ENCODE measurements at regions of chr1 and their contacts with region 1.

Region 1: DNA sequence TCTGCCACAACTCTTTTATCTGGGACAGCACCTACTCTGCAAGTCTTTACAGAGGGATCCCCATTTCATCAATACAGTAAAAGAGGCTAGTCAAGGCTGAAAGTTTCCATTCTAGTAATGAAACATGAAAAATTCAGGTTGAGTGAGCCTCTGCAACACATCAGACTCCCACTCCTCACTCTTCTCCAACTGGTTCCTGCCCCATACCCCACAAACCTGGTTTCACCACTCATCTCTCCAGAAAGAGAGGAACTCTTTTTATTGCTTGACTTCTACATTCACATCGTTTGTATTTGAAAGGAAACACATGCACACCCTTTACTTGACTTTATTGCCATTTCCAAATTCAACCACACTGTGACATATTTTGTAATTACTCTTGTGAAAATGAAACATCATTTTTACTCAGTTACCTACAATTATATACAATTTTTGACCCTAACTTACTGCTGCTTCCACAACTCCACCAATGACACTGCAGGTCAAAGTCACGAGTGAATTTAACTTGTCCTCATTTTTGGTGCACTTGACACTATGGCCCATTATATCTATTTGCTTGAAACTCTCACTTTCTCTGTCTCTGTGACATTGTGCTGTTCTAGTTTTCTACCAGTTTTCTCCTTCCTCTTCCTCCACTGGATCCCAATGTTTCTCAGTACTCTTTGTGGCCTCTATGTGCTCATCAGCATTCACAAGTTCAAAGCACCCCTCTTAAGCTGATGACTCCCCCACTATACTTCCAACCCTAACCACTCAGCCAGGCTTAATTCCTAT is 8.0 kb downstream of the STX6 start:
- DNase-seq: peak; percentile 55
- H3K4me3 Mint-ChIP-seq: no peak overlapping the region
- H3K27ac Mint-ChIP-seq: no peak overlapping the region
- H3K4me1 Mint-ChIP-seq: peaks cover 56% of the 10 kb centered on the region
- H3K27me3 Mint-ChIP-seq: no peaks in the 10 kb centered on the region

Region 2: DNA sequence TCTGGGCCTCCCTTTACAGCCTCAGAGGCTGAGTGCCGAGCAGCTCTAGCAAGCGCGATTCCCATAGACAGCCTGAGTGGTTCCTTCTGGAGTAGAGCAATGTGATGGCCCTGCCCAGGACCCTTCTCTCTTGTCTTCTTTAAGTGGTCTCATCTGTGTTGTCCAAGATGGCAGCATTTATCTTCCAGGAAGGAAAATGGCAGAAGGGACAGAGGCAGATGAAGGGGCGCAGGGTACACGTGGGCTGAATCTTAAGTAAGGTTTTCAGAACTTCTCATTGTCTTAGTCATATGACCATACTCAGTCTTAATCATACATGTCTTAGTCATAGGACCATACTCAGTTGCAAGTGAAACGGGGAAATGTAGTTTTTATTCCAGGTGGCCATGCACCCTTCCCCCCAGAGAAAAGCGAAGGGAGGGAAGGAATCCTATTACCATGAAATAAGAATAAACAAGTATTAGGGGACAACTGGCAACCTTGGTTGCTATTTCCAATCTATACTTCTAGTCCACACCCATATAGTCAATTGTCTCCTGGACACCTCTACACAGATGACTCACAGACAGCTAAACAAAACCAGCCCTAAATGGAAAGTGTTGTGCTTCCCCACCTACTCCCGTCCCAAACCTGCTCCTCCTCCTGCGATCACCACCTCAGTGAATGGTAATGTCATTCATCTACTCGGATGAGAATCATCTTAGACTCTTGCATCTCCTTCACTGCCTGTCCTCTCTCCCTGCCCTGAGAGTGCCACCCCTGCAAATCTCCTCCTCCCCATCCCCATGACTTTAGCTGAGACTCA is 442.6 kb before region 1 on chr1:
- CTCF ChIA-PET with region 1: no interaction called
- POLR2A ChIA-PET with region 1: no interaction called
- intact Hi-C with region 1: loop called (anchors 1 kb)
- DNase-seq: peak; percentile 77
- H3K4me3 Mint-ChIP-seq: peak overlapping the region; percentile 17
- H3K27ac Mint-ChIP-seq: peak overlapping the region; percentile 48
- H3K4me1 Mint-ChIP-seq: peaks cover 22% of the 10 kb centered on the region
- H3K27me3 Mint-ChIP-seq: peaks cover 20% of the 10 kb centered on the region

Region 3: GRCh38 chr1:180994262-180994661 is 20.4 kb before region 1 on chr1:
- CTCF ChIA-PET with region 1: interaction called, 4 read pairs
- POLR2A ChIA-PET with region 1: no interaction called
- intact Hi-C with region 1: loop called (anchors 2 kb)
- DNase-seq: peak; percentile 41
- H3K4me3 Mint-ChIP-seq: no peak overlapping the region
- H3K27ac Mint-ChIP-seq: no peak overlapping the region
- H3K4me1 Mint-ChIP-seq: peaks cover 7% of the 10 kb centered on the region
- H3K27me3 Mint-ChIP-seq: no peaks in the 10 kb centered on the region

Region 4: DNA sequence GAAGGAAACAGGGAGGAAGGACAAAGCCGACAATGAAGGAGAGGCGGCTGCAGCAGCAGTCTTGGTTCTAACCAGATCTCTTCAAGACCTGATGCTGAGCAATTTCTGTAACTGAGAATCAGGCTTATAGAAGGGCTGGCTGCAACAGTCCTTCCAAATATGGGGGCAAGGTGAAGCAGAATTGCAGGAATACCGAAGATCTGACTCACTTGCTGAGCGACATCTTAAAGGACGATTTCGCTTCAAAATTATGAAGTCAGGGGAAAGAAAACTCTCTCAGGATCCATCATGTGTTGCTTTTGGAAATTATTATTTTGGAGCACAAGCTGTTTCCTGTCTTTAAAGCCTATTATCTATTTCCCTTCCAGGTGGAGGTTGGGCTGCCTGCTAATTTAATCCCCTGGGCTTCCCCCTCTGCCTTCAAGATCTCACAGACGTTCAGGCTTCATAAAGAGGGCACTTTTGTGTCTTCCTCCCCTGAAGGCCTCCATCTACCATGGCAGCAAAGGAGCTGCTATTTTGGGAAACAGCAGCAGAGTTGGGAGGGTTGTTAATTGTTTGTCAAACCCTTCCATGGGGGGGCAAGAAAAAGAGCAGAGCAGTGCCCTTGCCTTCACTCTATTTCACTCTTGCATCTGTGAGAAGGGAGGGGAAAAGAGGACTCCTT is 63.0 kb after region 1 on chr1:
- CTCF ChIA-PET with region 1: no interaction called
- POLR2A ChIA-PET with region 1: no interaction called
- intact Hi-C with region 1: loop called (anchors 2 kb)
- DNase-seq: no peak
- H3K4me3 Mint-ChIP-seq: no peak overlapping the region
- H3K27ac Mint-ChIP-seq: no peak overlapping the region
- H3K4me1 Mint-ChIP-seq: peaks cover 18% of the 10 kb centered on the region
- H3K27me3 Mint-ChIP-seq: peaks cover 19% of the 10 kb centered on the region

Region 5: DNA sequence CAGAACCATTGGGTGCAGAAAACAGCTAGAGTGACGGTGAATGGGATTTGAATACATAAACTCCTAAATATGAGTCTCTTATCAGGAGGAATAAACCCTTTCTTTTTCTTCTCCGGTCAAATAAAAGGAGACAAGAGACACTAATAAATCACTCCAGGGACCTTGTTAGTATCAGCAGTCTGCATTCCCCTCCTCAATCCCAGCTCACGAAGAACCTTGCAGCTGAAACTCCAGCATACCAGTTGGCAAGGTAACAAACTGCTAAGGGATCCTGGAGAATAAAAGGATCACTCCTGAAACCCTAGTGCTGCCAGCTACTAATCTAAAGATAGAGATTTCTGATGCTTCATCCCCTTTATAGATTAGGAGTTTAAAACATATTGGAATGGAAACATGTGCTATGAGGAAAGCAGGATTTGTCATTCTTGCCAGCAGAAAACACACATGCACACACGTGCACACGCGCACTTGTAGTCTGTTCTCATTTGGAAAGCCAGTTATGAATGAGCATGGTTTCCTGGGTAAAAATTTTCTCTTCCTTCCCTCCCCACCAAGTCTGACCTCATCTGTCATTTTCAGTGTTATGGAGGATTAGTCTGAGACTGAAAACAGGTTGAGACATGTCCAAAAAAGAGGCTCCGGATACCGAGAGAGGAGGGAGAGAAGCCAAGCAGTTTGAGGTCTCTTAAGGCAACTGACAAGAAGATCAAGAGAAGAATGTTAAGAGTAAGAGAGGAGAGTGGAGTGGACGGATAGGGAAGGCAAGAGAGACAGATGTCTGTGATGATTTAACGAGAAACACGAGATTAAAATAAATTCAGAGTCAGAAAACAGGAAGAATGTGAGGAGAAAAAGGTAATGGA is 84.7 kb after region 1 on chr1:
- CTCF ChIA-PET with region 1: no interaction called
- POLR2A ChIA-PET with region 1: no interaction called
- intact Hi-C with region 1: loop called (anchors 1 kb)
- DNase-seq: peak; percentile 76
- H3K4me3 Mint-ChIP-seq: peak overlapping the region; percentile 47
- H3K27ac Mint-ChIP-seq: peak overlapping the region; percentile 84
- H3K4me1 Mint-ChIP-seq: peaks cover 71% of the 10 kb centered on the region
- H3K27me3 Mint-ChIP-seq: no peaks in the 10 kb centered on the region

Measured in activated CD4-positive, alpha-beta memory T cell treated with anti-CD3 and anti-CD28 coated beads for 36 hours (primary cell).